RWPE1 (cell line): ENCODE measurements at regions of chr2 and their contacts with region 1.

Region 1: GRCh38 chr2:59567151-59567550 is 986.3 kb downstream of the BCL11A start:
- DNase-seq: no peak
- H3K27ac ChIP-seq: no peak overlapping the region
- CTCF ChIP-seq: no peak

Region 2: DNA sequence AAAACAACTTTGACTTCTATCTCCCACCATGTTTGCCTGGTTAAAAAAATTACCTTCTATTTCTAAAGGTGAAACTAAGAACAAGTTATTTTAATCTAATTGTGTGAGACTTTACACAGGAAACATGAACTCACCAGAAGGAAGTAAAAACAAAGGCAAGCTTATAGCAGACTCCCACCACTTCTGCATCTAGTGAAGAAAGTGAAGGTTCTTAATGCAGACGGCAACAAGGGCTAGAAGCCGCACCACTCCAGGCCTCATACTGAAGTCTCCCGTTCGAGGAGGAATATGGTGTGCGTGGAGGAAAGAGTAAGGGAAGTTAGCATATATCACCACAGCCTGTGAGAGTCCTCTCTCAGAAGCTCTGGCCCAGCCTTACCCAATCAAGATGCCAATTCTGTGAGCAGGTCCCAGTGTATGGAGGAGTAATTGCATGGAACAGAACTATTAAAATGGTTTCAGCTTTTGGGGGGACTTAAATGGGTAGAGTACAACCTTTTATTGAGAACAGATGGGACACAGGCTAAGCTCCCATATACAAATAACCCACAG is 27.6 kb after region 1 on chr2:
- CTCF ChIA-PET with region 1: no interaction called
- POLR2A ChIA-PET with region 1: no interaction called
- DNase-seq: no peak
- H3K27ac ChIP-seq: no peak overlapping the region
- CTCF ChIP-seq: no peak

Region 3: DNA sequence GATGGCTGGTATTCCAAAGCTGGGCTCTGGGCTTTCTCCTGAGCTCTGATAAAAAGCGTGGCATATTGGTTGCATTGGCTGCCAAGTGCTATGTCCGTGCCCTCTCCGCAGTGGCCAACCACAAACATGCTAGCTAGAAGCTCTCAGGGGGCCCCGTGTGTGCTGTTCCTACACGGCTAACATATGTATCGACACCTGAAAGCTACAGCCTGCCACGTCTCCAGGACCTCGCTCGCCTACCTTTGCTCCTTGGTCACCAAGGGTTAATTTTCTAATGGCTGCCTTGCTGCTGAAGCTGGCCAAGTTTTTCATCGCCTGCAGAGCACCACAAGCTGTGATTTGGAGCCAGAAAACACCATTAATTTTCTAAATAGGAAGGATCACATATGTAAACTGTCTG is 97.9 kb after region 1 on chr2:
- CTCF ChIA-PET with region 1: no interaction called
- POLR2A ChIA-PET with region 1: interaction called, 12 read pairs
- DNase-seq: no peak
- H3K27ac ChIP-seq: no peak overlapping the region
- CTCF ChIP-seq: no peak

Region 4: DNA sequence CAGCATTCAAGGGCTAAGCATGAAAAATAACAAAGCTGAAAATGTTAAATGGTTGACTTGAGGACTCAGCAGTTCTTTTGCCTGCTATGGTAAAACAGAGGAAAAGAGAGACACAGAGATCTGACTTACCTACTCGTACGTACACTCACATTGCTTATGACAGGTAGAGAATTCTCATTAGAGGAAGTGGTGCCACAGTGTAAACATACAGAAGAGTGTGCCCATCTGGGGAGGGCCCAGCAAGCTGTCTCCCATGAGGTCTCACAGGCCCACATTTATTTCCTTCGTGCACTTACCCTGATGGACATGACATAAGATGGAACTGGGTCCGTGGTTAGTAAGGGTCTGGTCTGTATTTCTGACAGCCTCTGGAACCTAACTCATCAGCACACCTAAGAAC is 257.2 kb after region 1 on chr2:
- CTCF ChIA-PET with region 1: no interaction called
- POLR2A ChIA-PET with region 1: no interaction called
- DNase-seq: no peak
- H3K27ac ChIP-seq: no peak overlapping the region
- CTCF ChIP-seq: no peak